Activated T-helper 1 cell treated with anti-CD3 and anti-CD28 coated beads, Interleukin-12 subunit alpha, Interleukin-12 subunit beta, Interleukin-2, Interleukin-4 antibody, amounts not matched to agents 30 ng/mL and 10 ng/mL and 1 ng/mL, durations not matched to agents 14 hours and 24 hours and 36 hours (primary cell): ENCODE measurements at regions of chr1 and their contacts with region 1.

Region 1: GRCh38 chr1:92960395-92961130 is 699 bp downstream of the DIPK1A start:
- DNase-seq: peak; percentile 53
- H3K4me3 Mint-ChIP-seq: peak overlapping the region; percentile 90
- H3K27ac Mint-ChIP-seq: peak overlapping the region; percentile 97
- H3K4me1 Mint-ChIP-seq: peaks cover 41% of the 10 kb centered on the region
- H3K27me3 Mint-ChIP-seq: no peaks in the 10 kb centered on the region

Region 2: DNA sequence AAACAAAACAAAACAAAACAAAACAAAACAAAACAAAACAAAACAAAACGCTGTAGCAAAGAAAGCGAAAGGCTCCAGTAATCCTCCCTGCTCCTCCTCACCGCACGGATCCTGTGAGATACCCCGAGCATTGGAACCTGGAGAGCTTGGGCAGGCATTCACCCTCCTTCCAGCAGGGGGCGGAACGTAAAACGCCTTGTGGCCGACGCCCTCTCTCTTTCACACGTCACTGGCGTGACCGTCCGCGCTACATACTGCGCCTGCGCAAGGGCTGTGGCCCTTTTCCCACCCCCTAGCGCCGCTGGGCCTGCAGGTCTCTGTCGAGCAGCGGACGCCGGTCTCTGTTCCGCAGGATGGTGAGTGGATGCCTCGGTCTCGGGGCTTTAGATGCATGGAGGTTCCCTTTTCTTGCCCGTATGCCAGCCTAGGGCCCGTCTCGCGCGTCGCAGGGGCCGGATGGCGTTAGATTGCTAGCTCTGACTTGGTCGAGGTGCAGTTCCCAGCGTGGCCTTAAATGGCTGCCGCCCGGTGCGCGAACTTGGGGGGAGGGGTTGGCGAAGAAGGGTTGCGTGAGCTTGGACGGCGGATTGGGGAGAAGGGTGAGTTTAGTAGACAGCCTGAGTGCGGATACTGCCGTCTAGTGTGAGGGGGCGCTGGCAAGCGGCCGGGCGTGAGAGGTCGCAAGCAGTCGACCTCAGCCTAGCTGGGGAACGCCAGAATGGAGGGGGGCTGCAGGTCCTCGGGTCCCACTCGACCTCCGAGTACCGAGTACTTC is 128.6 kb before region 1 on chr1 and contains the start of gene RPL5:
- intact Hi-C with region 1: loop called (anchors 1 kb)
- DNase-seq: peak; percentile 96
- H3K4me3 Mint-ChIP-seq: peak within 1 kb of the TSS; percentile 96
- H3K27ac Mint-ChIP-seq: peak within 1 kb of the TSS; percentile 97
- H3K4me1 Mint-ChIP-seq: peaks cover 35% of the 10 kb centered on the region
- H3K27me3 Mint-ChIP-seq: peaks cover 2% of the 10 kb centered on the region
- total RNA-seq, gene RPL5: 1,115 and 1,120 TPM in 2 replicates

Region 3: DNA sequence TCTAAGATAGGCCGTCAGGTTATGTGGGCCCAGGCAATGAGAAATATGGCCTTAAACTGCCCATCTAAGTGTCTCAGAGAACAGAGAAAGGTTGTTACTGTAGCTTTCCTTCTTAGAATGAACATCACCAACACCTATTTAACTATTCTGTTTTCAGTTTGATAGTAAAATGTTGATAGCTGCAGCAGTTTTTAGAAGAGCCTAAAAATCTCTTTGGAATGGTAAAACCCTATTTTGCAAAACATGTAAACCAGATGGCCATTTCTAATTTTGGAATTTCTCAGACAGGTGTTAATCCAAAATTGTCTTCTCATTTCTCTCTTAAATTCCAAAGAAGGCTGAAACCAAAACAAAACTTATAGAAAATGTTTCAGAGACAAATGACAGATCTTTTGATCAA is 56.8 kb before region 1 on chr1:
- intact Hi-C with region 1: loop called (anchors 2 kb)
- DNase-seq: no peak
- H3K4me3 Mint-ChIP-seq: no peak overlapping the region
- H3K27ac Mint-ChIP-seq: peak overlapping the region; percentile 61
- H3K4me1 Mint-ChIP-seq: peaks cover 39% of the 10 kb centered on the region
- H3K27me3 Mint-ChIP-seq: no peaks in the 10 kb centered on the region

Region 4: GRCh38 chr1:92980732-92981647 is 20.4 kb after region 1 on chr1:
- intact Hi-C with region 1: loop called (anchors 1 kb)
- DNase-seq: peak; percentile 55
- H3K4me3 Mint-ChIP-seq: peak overlapping the region; percentile 60
- H3K27ac Mint-ChIP-seq: peak overlapping the region; percentile 97
- H3K4me1 Mint-ChIP-seq: peaks cover 67% of the 10 kb centered on the region
- H3K27me3 Mint-ChIP-seq: no peaks in the 10 kb centered on the region

Region 5: GRCh38 chr1:93042187-93043056 is 81.9 kb after region 1 on chr1:
- intact Hi-C with region 1: loop called (anchors 2 kb)
- DNase-seq: peak; percentile 53
- H3K4me3 Mint-ChIP-seq: peak overlapping the region; percentile 74
- H3K27ac Mint-ChIP-seq: peak overlapping the region; percentile 84
- H3K4me1 Mint-ChIP-seq: peaks cover 37% of the 10 kb centered on the region
- H3K27me3 Mint-ChIP-seq: no peaks in the 10 kb centered on the region

Region 6: DNA sequence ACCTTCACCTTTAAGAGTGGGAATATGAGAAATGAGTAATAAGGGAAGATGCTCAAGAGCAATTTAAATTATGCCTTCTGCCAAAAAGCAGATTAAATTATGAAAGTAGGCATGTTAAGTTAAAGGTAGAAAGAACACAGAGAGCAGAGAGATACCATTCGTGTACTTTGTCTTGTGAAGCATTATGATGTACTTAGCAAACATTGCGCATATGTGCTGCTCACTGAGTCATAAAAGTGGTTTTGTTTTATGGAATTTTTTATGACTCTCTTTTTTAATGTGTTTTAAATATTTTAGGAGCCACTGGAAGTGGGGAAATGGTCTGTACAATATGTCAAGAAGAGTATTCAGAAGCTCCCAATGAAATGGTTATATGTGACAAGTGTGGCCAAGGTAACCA is 153.8 kb after region 1 on chr1:
- intact Hi-C with region 1: no loop called
- DNase-seq: no peak
- H3K4me3 Mint-ChIP-seq: no peak overlapping the region
- H3K27ac Mint-ChIP-seq: no peak overlapping the region
- H3K4me1 Mint-ChIP-seq: peaks cover 15% of the 10 kb centered on the region
- H3K27me3 Mint-ChIP-seq: no peaks in the 10 kb centered on the region